HepG2 (cell line): ENCODE measurements at regions of chrX and their contacts with region 1.

Region 1: DNA sequence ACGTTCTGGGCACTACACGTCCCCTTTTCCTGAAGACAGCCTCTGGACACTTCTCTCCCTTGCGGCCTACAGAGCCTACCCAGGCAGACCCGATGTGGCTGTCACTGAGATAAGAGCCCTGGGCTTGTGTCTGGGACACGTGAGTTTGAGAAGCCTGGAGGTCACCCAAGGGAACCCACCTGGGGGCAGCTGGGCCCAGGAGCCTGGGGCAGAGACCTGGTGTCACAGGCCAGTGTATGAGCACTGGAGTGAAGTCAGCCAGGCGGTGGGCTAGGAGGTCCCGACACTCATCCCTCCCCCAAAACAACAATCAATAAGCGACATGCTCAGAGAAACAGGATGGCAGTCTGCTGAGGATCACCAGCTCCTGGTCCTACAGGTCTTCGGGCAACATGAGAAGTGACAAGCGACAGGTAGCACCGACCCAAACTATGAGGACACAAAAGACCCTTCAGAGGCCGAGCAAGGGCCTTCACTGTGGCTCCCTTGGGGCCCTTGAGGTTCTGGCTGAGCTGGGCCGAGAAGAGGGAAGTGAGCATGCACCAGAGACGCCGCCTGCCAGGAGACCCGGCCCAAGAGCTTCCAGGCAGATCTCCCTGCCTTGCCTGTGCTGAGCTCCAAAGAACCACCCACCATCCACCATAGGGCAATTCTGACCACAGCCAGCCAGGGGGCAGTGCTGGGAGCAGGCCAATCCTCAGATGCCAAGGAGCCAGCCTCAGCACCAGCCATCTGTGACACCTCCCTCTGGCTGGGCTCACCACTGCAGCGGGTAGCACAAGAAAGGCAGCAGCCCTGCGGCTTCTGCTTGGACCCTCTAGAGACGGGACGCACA is 11.0 kb upstream of the DUSP9 start:
- DNase-seq: peak; percentile 59
- ATAC-seq: peak; percentile 76
- H3K4me3 ChIP-seq: no peak overlapping the region; a peak in 1 of 6 replicates
- H3K27ac ChIP-seq: peak overlapping the region; percentile 43
- H3K4me1 ChIP-seq: peaks cover 75% of the 10 kb centered on the region
- H3K27me3 ChIP-seq: no peaks in the 10 kb centered on the region
- CTCF ChIP-seq: peak; percentile 71
- EP300 ChIP-seq: no peak
- POLR2A ChIP-seq: no peak
- RAD21 ChIP-seq: peak; percentile 76

Region 2: GRCh38 chrX:153411255-153411987 is 224.6 kb before region 1 on chrX and contains the start of gene ZFP92:
- CTCF ChIA-PET with region 1: no interaction called
- POLR2A ChIA-PET with region 1: no interaction called
- in situ Hi-C with region 1: no loop called
- intact Hi-C with region 1: no loop called
- DNase-seq: no peak
- ATAC-seq: no peak
- H3K4me3 ChIP-seq: no peak within 1 kb of the TSS
- H3K27ac ChIP-seq: peak within 1 kb of the TSS; percentile 67
- H3K4me1 ChIP-seq: peaks cover 48% of the 10 kb centered on the region
- H3K27me3 ChIP-seq: peaks cover 0 to 2% of the 10 kb centered on the region in 2 experiments; a peak in 1 of 5 replicates
- CTCF ChIP-seq: no peak
- EP300 ChIP-seq: no peak
- POLR2A ChIP-seq: no peak
- RAD21 ChIP-seq: no peak
- total RNA-seq, gene ZFP92: 0.02 and 0.03 TPM in 2 replicates

Region 3: GRCh38 chrX:153649178-153649914 is 13.3 kb after region 1 on chrX:
- CTCF ChIA-PET with region 1: interaction called, 5 read pairs
- POLR2A ChIA-PET with region 1: interaction called, 596 read pairs
- in situ Hi-C with region 1: no loop called
- intact Hi-C with region 1: no loop called
- DNase-seq: peak; percentile 70
- ATAC-seq: peak; percentile 32
- H3K4me3 ChIP-seq: peak overlapping the region; percentile 69 to 79 (median 75); a peak in 5 of 6 replicates
- H3K27ac ChIP-seq: peak overlapping the region; percentile 79
- H3K4me1 ChIP-seq: peaks cover 50% of the 10 kb centered on the region
- H3K27me3 ChIP-seq: no peaks in the 10 kb centered on the region; a peak in 1 of 5 replicates
- CTCF ChIP-seq: peak; percentile 67
- EP300 ChIP-seq: no peak
- POLR2A ChIP-seq: no peak
- RAD21 ChIP-seq: peak; percentile 72